PC-9 (cell line): ENCODE measurements at regions of chr3 and their contacts with region 1.

Region 1: GRCh38 chr3:150589759-150590158 is 13.4 kb upstream of the SELENOT start:
- DNase-seq: no peak
- H3K4me3 ChIP-seq: no peak overlapping the region
- H3K27ac ChIP-seq: no peak overlapping the region
- H3K4me1 ChIP-seq: no peaks in the 10 kb centered on the region
- H3K27me3 ChIP-seq: no peaks in the 10 kb centered on the region
- CTCF ChIP-seq: no peak

Region 2: GRCh38 chr3:149547938-149548668 is 1041.7 kb before region 1 on chr3:
- CTCF ChIA-PET with region 1: no interaction called
- POLR2A ChIA-PET with region 1: interaction called, 11 read pairs
- intact Hi-C with region 1: no loop called
- DNase-seq: peak; percentile 49 to 74
- H3K4me3 ChIP-seq: no peak overlapping the region
- H3K27ac ChIP-seq: peak overlapping the region; percentile 41; the same call in 1 of the 2 replicates
- H3K4me1 ChIP-seq: no peaks in the 10 kb centered on the region
- H3K27me3 ChIP-seq: no peaks in the 10 kb centered on the region
- CTCF ChIP-seq: no peak